K562 (cell line): ENCODE measurements at regions of chr9 and their contacts with region 1.

Region 1: DNA sequence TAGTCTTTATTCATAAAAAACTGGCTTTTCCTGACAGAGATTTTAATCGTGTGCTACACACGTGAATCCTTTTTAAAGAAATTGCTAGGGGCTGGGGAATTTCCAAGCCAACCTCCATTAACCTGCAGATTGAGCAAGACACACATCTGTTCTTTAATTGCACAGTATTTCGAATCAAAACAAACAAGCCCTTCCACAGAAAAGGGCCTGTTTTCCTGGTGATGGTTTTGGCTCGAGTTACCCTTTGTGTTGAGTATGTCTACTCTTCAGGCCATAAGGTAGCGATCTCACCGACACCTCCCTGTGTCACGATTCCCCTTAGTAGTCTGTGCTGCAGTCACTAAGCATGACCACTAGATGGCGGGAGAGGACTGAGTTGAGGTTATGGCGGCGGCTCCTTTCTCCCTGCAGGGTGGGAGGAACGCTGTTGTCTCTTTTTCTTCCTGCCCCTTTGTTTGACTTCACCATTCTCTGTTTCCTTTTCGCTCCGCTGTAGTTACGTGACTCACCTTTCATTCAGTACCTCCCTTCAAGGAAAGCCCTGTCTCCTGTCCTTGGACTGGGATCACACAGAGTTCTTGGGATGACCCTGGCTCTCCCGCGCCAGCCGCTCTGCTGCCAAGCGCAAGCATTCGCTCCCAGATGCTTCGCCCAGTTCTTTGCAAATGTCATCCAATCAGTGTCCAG is 137.1 kb upstream of the SLC24A2 start:
- DNase-seq: peak; percentile 56 to 61 (median 58)
- ATAC-seq: peak; percentile 88
- H3K4me3 ChIP-seq: no peak overlapping the region
- H3K27ac ChIP-seq: no peak overlapping the region
- H3K4me1 ChIP-seq: no peaks in the 10 kb centered on the region
- H3K27me3 ChIP-seq: no peaks in the 10 kb centered on the region
- CTCF ChIP-seq: peak; percentile 67 to 81 (median 77)
- EP300 ChIP-seq: no peak
- POLR2A ChIP-seq: no peak
- RAD21 ChIP-seq: peak; percentile 64 to 85

Region 2: GRCh38 chr9:19481971-19482404 is 444.0 kb before region 1 on chr9:
- CTCF ChIA-PET with region 1: no interaction called
- POLR2A ChIA-PET with region 1: no interaction called
- in situ Hi-C with region 1: loop called (anchors 10 kb)
- intact Hi-C with region 1: no loop called
- DNase-seq: no peak
- ATAC-seq: no peak
- H3K4me3 ChIP-seq: no peak overlapping the region
- H3K27ac ChIP-seq: no peak overlapping the region
- H3K4me1 ChIP-seq: no peaks in the 10 kb centered on the region
- H3K27me3 ChIP-seq: no peaks in the 10 kb centered on the region
- CTCF ChIP-seq: no peak
- EP300 ChIP-seq: no peak
- POLR2A ChIP-seq: no peak
- RAD21 ChIP-seq: no peak

Region 3: GRCh38 chr9:19493174-19493811 is 432.7 kb before region 1 on chr9:
- CTCF ChIA-PET with region 1: no interaction called
- POLR2A ChIA-PET with region 1: no interaction called
- in situ Hi-C with region 1: loop called (anchors 10 kb)
- intact Hi-C with region 1: loop called (anchors 1 kb)
- DNase-seq: peak; percentile 37 to 43 (median 39)
- ATAC-seq: peak; percentile 88
- H3K4me3 ChIP-seq: no peak overlapping the region
- H3K27ac ChIP-seq: no peak overlapping the region
- H3K4me1 ChIP-seq: peaks cover 3 to 5% of the 10 kb centered on the region in 2 experiments; a peak in 3 of 5 replicates
- H3K27me3 ChIP-seq: no peaks in the 10 kb centered on the region
- CTCF ChIP-seq: peak; percentile 58 to 75 (median 74)
- EP300 ChIP-seq: no peak
- POLR2A ChIP-seq: no peak
- RAD21 ChIP-seq: peak; percentile 51 to 69